Mucosa of descending colon (tissue), 3 donors: ENCODE measurements at regions of chr6 and their contacts with region 1.

Region 1: DNA sequence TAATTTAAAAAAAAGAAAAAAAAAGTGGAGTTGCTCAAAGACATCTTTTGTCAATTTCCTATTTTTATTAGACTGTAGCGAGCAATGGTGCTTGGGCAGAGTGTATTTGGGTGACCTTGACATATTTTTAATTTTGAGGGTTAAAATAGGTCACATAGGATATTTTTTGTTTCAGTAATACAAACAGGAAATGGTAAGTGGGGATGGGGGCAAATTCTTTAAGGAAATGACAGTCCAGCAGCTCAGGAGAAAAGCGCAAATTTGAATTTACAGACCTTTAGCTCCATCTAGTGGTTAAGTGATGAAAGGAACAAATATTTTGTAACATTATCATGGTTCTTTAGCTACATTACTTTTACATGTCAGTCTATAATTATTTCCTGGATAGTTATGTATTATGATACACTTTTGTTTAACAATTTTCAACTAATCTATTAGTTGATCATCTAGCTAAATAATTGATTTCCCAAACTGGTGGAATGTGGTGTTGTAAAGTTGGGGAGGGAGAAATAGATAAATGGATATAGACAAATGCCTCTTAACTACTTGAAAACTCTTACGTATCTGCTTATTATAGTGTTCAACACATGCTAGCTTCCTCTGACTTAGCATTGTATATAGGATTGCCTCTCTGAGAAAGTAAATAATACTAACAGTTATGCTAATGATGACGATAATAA is 10.0 kb downstream of the CITED2 start:
- DNase-seq: no peak
- ATAC-seq: peak; percentile 67
- H3K4me3 ChIP-seq: no peak overlapping the region
- H3K4me1 ChIP-seq: peaks cover under 1% of the 10 kb centered on the region
- CTCF ChIP-seq: peak; percentile 41

Region 2: DNA sequence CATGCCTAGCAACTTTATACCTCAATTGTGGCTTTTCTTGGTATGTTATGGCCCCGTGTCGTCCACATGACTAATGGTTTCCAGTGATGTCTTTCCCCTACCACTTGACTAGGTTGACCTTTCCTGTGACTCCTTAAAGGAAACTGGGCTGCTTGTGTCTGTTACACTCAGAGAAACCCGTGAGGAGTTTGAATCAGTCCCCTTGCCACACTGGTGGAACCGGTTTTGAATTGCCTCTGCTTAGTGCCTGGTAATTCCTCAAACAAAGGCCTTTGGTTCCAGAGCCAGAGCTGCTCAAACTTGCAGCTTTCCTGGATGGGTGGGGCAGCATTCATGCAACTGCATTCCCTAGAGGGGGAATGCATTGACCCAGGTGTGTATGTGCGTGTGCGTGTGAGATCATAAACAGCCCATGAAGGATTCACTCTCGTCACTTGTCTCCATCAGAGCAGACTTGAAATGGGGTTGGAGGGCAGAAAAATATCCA is 546.6 kb before region 1 on chr6:
- intact Hi-C with region 1: loop called (anchors 5 to 10 kb)
- DNase-seq: peak; percentile 74 to 95 (median 78)
- ATAC-seq: peak; percentile 94
- H3K4me3 ChIP-seq: no peak overlapping the region
- H3K4me1 ChIP-seq: peaks cover 16% of the 10 kb centered on the region
- CTCF ChIP-seq: no peak

Region 3: DNA sequence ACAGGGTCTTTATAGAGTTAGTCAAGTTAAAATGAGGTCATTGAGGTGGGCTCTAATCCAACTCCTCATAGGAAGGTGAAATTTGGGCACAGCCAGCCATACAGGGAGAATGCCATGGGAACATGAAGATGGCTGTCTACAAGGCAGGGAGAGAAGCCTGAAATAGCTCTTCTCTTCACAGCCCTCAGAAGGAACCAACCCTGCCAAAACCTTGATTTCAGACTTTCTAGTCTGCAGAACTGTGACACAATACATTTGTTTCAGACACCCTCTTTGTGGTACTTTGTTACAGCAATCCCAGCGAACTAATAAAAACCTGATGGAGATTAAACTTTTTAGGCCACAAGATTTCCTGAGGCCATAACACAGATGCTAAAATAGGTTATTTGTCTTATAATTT is 272.6 kb before region 1 on chr6:
- intact Hi-C with region 1: no loop called
- DNase-seq: no peak
- ATAC-seq: no peak
- H3K4me3 ChIP-seq: no peak overlapping the region
- H3K4me1 ChIP-seq: no peaks in the 10 kb centered on the region
- CTCF ChIP-seq: no peak

Region 4: GRCh38 chr6:139124887-139125672 is 239.4 kb before region 1 on chr6:
- intact Hi-C with region 1: loop called in 1 of 2 experiments (anchors 5 kb)
- DNase-seq: peak; percentile 65 to 88 (median 78)
- ATAC-seq: peak; percentile 100
- H3K4me3 ChIP-seq: no peak overlapping the region
- H3K4me1 ChIP-seq: peaks cover 5% of the 10 kb centered on the region
- CTCF ChIP-seq: no peak

Region 5: DNA sequence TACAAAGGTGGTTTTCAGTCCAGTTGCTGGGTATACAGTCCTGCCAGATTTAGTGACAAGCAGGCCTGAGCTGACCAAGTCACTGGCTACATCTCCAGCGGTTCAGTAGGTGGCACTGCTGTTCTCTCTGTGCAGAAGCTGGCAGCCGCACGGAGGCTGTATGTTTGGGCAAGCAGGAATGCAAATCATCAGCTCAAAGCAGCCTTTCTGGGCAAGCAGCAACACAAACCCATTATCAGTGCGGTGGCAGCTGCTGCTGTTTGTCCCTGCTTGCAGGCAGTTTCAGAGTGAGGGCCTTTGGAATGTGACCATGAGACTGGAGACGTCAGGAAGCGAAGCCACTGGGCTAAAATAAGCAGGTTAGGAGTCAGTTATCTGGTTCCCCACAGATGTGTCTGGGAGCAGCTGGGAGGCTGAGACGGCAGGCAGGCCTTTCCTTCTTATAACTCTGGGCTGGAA is 145.1 kb before region 1 on chr6:
- intact Hi-C with region 1: loop called in 1 of 2 experiments (anchors 2 kb)
- DNase-seq: peak; percentile 76 to 84 (median 82)
- ATAC-seq: peak; percentile 100
- H3K4me3 ChIP-seq: no peak overlapping the region
- H3K4me1 ChIP-seq: no peaks in the 10 kb centered on the region
- CTCF ChIP-seq: peak; percentile 70

Region 6: DNA sequence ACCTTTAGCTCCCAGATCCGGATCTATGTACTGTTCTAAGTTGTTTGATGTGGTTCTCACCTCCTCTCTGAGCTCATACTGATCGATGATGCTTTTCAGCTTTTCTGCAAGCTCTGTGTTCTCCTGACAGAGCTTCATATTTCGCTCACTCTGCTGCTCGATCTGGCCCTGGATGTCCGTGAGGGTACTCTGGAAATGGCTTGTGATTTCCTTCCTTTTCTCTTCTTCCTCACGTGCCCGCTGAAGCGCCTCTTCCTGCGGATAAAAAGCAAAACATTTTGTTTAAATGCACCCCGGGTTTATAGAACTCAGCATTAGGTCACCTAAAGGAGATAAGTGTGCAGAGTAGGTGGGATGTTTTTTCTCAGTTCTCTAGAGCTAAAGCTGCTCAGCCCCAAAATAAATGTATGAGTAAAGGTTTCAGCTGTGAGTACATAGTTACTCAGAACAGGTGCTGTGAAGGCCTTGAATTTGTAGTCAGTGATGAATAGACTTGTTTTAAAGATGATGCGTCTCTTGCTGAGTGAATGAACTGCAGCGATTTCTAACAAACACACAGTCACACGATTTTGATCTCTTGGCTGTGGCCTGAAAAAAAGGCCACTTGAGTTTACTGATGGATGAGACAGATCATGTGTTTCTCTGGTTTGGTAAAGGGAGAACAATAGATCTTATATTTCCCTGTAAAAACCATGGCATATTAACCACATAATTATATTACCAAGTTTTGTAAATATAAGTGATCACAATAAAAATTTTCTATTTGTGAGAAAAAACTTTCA is 101.7 kb before region 1 on chr6:
- intact Hi-C with region 1: no loop called
- DNase-seq: no peak
- ATAC-seq: peak; percentile 55
- H3K4me3 ChIP-seq: no peak overlapping the region
- H3K4me1 ChIP-seq: no peaks in the 10 kb centered on the region
- CTCF ChIP-seq: no peak

Region 7: GRCh38 chr6:139508023-139508422 is 143.6 kb after region 1 on chr6:
- intact Hi-C with region 1: no loop called
- DNase-seq: no peak
- ATAC-seq: no peak
- H3K4me3 ChIP-seq: no peak overlapping the region
- H3K4me1 ChIP-seq: no peaks in the 10 kb centered on the region
- CTCF ChIP-seq: no peak

Region 8: GRCh38 chr6:140921366-140922226 is 1557.2 kb after region 1 on chr6:
- intact Hi-C with region 1: loop called in 1 of 2 experiments (anchors 10 kb)
- DNase-seq: peak in 1 of 3 donors; percentile 32
- ATAC-seq: peak; percentile 88
- H3K4me3 ChIP-seq: no peak overlapping the region
- H3K4me1 ChIP-seq: no peaks in the 10 kb centered on the region
- CTCF ChIP-seq: peak; percentile 33